HCT116 (cell line): ENCODE measurements at regions of chr14 and their contacts with region 1.

Region 1: DNA sequence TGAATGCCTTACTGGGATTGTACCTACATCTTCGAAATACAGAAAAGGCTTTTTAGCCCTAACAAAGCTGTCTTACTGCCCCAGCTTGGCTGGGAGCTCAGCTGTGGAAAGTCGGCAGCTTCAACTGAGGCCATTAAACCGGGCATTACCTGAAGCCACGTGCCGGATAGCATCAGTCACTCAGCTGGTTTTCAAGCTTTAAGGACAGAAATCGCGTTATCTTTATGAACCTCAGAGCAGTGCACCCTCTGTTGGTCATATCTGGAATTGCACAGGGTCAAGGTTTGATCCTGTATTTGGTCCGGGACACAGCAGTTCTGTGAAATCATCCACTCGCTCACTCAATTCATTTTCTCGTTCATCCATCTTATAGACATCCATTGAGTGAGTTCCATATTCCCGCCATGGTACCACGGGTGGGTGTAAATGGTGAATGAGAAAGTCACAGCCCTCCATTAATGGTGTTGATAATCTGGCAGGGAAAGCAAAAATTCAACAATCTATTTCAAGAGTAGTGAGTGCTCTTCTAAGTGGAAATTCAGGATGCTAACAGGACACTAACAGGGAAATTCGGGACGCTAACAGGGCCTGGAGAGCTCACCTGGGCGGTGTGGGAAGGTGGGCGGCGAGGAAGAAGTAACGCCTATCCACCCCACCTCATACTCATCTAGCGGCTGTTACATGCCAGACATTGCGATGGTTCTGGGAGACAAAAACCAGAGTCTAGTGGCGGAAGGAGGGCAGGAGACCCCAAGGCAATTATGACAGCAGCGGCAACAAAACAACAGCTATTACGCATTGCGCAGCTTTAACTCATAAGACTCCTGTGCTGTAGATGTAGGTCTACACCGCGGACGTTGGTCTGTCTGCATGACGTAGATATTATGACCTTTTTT is 60.6 kb upstream of the TCL1A start:
- DNase-seq: peak; percentile 56
- ATAC-seq: peak; percentile 70
- H3K4me3 ChIP-seq: no peak overlapping the region
- H3K27ac ChIP-seq: no peak overlapping the region
- H3K4me1 ChIP-seq: no peaks in the 10 kb centered on the region
- H3K27me3 ChIP-seq: peaks cover 7% of the 10 kb centered on the region; the same call in 1 of the 2 replicates
- CTCF ChIP-seq: peak; percentile 66 to 93 (median 91); a peak in 5 of 6 replicates
- POLR2A ChIP-seq: no peak
- RAD21 ChIP-seq: peak; percentile 63

Region 2: DNA sequence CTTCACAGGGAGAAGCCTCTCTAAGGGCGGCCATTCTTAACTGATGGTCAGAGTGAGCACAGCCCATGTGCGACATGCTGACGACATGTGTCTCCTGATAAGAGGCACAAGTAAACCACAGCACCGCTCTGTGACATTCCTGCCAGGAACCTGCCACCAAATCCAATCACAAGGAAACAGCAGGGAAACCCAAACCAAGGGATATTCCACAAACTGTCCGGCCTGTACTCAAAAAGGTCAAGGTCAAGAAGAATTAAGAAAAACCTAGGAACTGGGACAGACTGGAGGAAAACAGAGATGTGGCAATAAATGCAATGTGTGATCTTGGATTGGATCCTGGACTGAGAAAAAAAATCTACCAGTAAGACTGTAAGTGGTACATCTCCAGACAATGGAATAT is 350.0 kb before region 1 on chr14:
- CTCF ChIA-PET with region 1: no interaction called
- POLR2A ChIA-PET with region 1: no interaction called
- RAD21 ChIA-PET with region 1: no interaction called
- intact Hi-C with region 1: loop called (anchors 10 kb)
- DNase-seq: no peak
- ATAC-seq: no peak
- H3K4me3 ChIP-seq: no peak overlapping the region
- H3K27ac ChIP-seq: no peak overlapping the region
- H3K4me1 ChIP-seq: peaks cover 0 to 11% of the 10 kb centered on the region in 2 experiments; a peak in 2 of 4 replicates
- H3K27me3 ChIP-seq: no peaks in the 10 kb centered on the region
- CTCF ChIP-seq: no peak
- POLR2A ChIP-seq: no peak
- RAD21 ChIP-seq: no peak

Region 3: DNA sequence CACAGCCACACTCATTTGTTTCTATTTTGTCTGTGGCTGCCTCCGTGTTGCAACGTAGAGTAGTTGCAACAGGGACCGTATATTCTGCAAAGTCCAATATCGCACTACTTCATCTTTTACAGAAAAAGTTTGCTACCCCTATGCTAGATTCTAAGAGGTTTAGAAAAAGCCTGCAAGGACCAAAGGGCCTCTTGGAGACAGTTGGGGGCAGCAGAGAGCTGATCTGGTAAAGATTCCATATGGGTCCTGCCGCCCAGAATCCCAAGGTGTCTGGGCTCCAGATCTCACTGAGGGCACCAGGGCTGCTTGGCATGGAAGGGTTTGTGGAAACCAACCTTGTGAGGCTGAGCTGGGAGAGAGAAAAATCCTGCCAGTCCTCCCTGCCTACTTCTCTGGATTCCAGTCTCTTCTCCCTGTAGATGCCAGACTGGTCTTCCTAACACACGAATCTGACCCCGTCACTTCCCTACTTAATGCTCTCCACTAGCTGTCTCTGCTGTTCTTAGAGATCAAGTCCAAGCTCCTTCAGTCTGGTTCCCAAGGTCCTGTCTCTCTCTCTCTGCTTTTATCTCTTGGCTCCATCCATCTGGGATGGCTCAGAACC is 165.0 kb before region 1 on chr14:
- CTCF ChIA-PET with region 1: interaction called, 3 read pairs
- POLR2A ChIA-PET with region 1: no interaction called
- RAD21 ChIA-PET with region 1: no interaction called
- intact Hi-C with region 1: loop called (anchors 1 kb)
- DNase-seq: peak; percentile 42
- ATAC-seq: peak; percentile 89
- H3K4me3 ChIP-seq: no peak overlapping the region
- H3K27ac ChIP-seq: no peak overlapping the region
- H3K4me1 ChIP-seq: no peaks in the 10 kb centered on the region
- H3K27me3 ChIP-seq: peaks cover 80% of the 10 kb centered on the region
- CTCF ChIP-seq: peak; percentile 46 to 75 (median 68); a peak in 5 of 6 replicates
- POLR2A ChIP-seq: no peak
- RAD21 ChIP-seq: peak; percentile 60

Region 4: GRCh38 chr14:95876761-95877538 is 102.4 kb after region 1 on chr14 and contains the start of gene TUNAR:
- CTCF ChIA-PET with region 1: no interaction called
- POLR2A ChIA-PET with region 1: no interaction called
- RAD21 ChIA-PET with region 1: no interaction called
- intact Hi-C with region 1: no loop called
- DNase-seq: no peak
- ATAC-seq: no peak
- H3K4me3 ChIP-seq: no peak within 1 kb of the TSS
- H3K27ac ChIP-seq: no peak within 1 kb of the TSS
- H3K4me1 ChIP-seq: no peaks in the 10 kb centered on the region
- H3K27me3 ChIP-seq: peaks cover 56% of the 10 kb centered on the region
- CTCF ChIP-seq: no peak
- POLR2A ChIP-seq: no peak
- RAD21 ChIP-seq: no peak
- total RNA-seq, gene TUNAR: not detected